ENCODE measurements at regions of chr2 and their contacts with region 1.

Region 1: GRCh38 chr2:101012706-101013181 is 10.7 kb downstream of the RPL31 start:
- DNase-seq: no peak
- ATAC-seq: no peak
- H3K4me3 Mint-ChIP-seq: no peak overlapping the region
- H3K27ac Mint-ChIP-seq: no peak overlapping the region
- H3K4me1 Mint-ChIP-seq: peaks cover 20% of the 10 kb centered on the region
- H3K27me3 Mint-ChIP-seq: no peaks in the 10 kb centered on the region
- CTCF ChIP-seq: peak; percentile 93

Region 2: DNA sequence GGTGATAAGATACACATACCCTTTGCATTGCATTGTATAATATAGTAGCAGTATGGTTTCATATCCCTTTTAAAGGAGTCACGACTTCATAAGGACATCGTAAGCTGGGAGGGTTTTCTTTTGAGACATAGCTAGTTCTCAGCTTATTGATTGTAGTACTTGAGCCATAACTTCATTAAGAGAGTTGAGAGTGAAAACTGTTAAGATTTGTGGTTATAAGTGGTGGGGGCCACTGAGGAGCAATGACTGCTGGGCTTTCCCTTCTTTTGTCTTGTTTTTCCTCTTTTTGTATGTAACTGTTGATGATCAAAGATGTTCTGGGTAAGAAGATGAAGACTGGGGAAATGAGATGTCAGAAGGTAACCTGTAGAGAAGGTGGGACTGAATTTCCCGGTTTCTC is 1664.6 kb before region 1 on chr2:
- CTCF ChIA-PET with region 1: no interaction called
- POLR2A ChIA-PET with region 1: no interaction called
- intact Hi-C with region 1: no loop called
- DNase-seq: no peak
- ATAC-seq: peak; percentile 21
- H3K4me3 Mint-ChIP-seq: no peak overlapping the region
- H3K27ac Mint-ChIP-seq: peak overlapping the region; percentile 57
- H3K4me1 Mint-ChIP-seq: peaks cover 46% of the 10 kb centered on the region
- H3K27me3 Mint-ChIP-seq: no peaks in the 10 kb centered on the region
- CTCF ChIP-seq: no peak

Region 3: GRCh38 chr2:101001691-101002561 is 10.8 kb before region 1 on chr2 and contains the start of gene RPL31:
- CTCF ChIA-PET with region 1: interaction called, 14 read pairs
- POLR2A ChIA-PET with region 1: interaction called, 10 read pairs
- intact Hi-C with region 1: loop called (anchors 1 kb)
- DNase-seq: peak; percentile 86
- ATAC-seq: peak; percentile 95
- H3K4me3 Mint-ChIP-seq: peak within 1 kb of the TSS; percentile 97
- H3K27ac Mint-ChIP-seq: peak within 1 kb of the TSS; percentile 95
- H3K4me1 Mint-ChIP-seq: peaks cover 38% of the 10 kb centered on the region
- H3K27me3 Mint-ChIP-seq: no peaks in the 10 kb centered on the region
- CTCF ChIP-seq: no peak
- total RNA-seq, gene RPL31: 1,828 and 2,370 TPM in 2 replicates

Region 4: DNA sequence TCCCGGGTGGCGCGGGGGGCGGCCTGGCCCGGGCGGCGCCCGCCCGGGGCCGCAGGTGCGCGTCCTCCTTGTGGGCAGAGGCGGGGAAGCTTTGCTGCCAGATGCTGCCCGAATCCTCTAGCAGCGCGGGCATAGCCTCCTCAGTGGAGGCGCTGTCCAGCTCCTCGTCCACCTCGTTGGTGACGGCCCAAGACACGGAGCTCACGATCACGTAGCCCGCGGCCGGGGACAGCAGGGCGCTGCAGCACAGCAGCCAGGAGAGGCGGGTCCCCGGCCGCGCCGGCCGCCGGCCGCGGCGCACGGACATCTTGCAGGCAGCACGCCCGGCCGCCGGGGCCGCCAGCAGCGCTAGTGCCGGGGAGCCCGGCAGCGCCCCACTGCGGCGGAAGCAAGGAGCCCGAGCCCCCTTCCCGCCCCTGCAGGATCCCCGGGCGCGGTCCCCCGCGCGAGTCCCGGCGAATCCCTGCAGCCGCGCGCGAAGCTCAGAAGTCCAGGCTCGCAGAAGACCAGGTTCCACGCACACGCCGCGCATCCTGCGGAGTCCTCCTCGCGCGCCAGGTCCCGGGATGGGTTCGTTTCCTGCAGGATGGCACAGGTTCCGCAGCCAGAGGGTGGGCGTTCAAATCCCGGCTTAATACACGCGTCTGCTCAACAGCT is 374.5 kb after region 1 on chr2 and contains the start of gene CREG2:
- CTCF ChIA-PET with region 1: no interaction called
- POLR2A ChIA-PET with region 1: no interaction called
- intact Hi-C with region 1: loop called (anchors 5 kb)
- DNase-seq: peak; percentile 44
- ATAC-seq: peak; percentile 83
- H3K4me3 Mint-ChIP-seq: peak within 1 kb of the TSS; percentile 66
- H3K27ac Mint-ChIP-seq: no peak within 1 kb of the TSS
- H3K4me1 Mint-ChIP-seq: peaks cover 15% of the 10 kb centered on the region
- H3K27me3 Mint-ChIP-seq: peaks cover 45% of the 10 kb centered on the region
- CTCF ChIP-seq: no peak
- total RNA-seq, gene CREG2: not detected in 2 replicates